Posterior cingulate gyrus (tissue), 11 donors: ENCODE measurements at regions of chr7 and their contacts with region 1.

Region 1: DNA sequence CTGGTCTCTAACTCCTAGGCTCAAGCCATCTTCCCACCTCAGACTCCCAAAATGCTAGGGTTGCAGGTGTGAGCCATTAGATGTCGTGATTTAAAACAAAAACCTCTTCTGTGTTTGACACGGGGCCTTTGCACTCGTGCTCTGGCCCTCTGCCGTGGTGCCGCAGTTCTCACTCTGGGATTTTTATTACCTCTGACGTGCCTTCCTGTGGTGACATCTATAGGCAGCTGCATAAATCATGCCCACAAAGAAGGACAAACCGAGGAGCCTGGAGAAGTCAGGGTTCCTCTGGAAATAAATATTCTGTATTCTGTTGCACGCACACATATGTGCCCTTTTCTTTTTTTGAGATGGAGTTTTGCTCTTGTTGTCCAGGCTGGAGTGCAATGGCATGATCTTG is 25.9 kb upstream of the OCM start:
- DNase-seq: peak in 3 of 10 donors; percentile 3 to 25 (median 16)

Region 2: DNA sequence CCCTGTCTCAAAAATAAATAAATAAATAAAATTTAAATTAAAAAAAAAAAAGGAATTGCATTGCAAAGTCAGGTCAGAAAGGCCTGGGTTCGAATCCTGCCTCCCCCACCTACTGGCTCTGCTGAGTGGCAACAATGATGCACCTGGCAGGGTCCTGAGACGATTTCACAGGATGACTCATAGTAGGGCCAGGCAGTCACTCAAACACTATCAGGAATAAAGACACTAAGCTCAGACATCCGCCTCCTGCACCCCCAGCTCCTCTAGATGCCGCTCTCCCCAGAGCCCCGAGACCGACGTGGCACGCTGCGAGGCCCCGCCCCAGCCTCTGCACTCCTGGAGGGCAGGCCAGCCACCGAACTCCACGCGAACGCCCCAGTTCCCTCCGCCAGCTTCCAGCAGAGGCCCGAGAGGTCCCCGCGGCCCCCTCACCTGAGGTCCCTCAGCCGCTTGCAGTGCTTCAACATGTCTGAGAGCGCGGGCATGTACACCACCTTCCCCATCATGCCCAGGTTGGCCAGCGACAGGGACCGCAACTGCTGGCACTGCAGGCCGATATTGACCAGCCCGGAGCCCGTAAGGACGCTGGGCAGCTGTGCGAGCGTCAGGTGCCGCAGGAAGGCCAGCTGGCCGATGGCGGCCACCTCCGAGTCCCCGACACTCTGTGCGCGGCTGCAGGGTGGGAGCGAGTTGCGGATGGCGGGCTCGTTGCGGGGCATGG is 354.5 kb before region 1 on chr7:
- intact Hi-C with region 1: no loop called
- DNase-seq: no peak

Region 3: DNA sequence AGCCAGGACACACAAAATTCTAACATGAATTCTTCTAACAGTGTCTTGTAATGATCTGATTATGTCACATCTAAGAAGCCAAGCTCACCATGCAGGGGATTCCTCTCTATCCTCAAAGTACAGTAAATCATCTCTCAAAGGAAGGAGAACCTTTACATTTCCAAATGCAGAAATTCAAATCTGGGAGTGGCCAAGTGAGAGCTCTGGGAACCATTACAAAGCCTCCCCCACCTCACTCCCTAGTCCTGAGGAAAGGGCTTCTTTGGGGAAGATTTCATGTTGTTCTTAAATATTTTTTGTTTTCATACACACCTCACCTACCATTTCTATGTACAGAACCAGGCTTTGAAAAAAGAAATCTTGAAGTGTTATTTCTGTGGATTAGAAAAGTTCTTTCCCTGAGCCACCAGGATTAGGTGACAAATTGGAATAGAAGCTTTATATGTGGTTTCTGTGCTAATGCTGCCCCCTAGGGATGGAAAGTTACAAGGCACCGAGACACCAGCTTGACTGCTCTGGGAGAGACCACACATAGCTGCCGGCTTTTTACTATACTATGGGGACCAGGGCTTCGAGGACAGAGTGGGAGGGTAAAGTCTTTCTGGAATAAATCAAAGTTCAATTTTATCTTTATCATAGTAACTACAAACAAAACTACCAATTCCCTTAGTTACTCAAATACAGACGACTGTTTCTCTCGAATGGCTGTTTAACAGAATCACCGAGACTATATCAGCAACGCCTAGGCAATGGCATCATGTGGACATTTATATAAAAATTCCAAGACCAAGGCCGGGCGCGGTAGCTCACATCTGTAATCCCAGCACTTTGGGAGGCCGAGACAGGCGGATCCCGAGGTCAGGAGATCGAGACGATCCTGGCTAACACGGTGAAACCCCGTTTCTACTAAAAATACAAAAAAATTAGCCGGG is 189.4 kb before region 1 on chr7:
- intact Hi-C with region 1: no loop called
- DNase-seq: peak in 9 of 10 donors; percentile 46 to 93 (median 77)

Region 4: GRCh38 chr7:6015917-6016652 is 161.3 kb after region 1 on chr7:
- intact Hi-C with region 1: no loop called
- DNase-seq: peak in 5 of 10 donors; percentile 21 to 88 (median 45)

Region 5: GRCh38 chr7:6026011-6026819 is 171.5 kb after region 1 on chr7:
- intact Hi-C with region 1: no loop called
- DNase-seq: peak in 7 of 10 donors; percentile 17 to 86 (median 31)

Region 6: DNA sequence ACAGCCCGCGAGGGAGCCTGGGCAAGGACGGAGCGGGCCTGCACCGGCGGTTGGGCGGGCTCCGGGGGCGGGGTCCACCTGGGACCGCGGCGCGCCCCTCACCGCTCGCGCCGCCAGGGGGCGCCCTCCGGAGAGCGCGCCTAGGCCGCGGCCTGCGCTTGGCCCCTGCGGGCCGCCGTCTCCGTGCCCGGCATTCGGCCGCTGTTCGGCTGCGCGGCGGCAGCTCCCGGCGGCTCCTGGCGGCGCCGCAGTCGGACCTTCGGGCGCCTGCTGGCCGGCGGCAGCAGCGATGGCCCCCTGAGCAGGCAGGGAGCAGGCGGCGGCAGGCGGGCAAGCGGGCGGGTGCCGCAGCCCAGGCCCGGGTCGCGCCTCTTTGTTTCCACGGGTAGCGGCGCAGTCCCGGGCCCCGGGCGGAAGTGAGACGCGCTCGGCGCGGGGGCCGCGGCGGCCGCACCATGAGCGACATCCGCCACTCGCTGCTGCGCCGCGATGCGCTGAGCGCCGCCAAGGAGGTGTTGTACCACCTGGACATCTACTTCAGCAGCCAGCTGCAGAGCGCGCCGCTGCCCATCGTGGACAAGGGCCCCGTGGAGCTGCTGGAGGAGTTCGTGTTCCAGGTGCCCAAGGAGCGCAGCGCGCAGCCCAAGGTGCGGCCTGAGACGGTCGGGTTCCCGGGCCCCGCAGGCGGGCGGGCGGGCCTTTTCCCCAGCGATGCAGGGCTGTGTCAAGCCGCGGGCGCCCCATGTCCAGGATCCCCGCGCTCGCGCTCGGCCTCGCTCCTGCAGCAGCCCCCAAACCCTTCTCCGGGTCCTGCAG is 735.3 kb after region 1 on chr7 and contains the start of gene INTS15:
- intact Hi-C with region 1: loop called (anchors 10 kb)
- DNase-seq: peak; percentile 52 to 96 (median 61)